Esophagus muscularis mucosa (tissue), 4 donors: ENCODE measurements at regions of chr13 and their contacts with region 1.

Region 1: DNA sequence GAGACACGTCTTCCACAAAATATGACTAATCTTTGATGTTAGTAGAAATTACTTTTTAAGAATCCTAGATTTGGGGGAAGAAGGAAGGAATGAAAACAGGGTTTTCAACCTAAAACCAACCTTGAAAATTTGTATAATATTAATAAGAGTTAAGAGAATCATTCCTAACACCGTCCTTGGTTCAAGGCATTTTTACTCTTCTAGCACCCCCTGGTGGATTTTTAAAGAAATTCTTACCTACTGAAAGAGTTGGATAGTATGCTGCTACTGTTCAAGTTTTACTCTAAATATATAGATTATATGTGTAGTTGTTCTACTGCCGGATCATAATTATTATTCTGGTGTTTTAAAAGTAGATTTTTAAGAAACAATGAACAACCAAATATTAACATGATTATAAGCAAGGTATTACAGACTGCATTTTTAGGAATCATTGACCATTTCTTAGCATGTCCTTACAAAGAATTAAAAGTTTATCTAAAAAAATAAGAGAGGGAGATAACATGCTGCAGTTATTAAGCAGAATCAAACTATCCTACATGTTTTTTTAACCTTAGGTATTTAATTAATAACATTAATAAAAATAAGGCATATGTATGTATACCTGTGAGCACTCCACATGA is 7.4 kb upstream of the SLITRK6 start:
- DNase-seq: no peak
- H3K4me3 ChIP-seq: no peak overlapping the region
- H3K27ac ChIP-seq: no peak overlapping the region
- H3K4me1 ChIP-seq: no peaks in the 10 kb centered on the region
- H3K27me3 ChIP-seq: no peaks in the 10 kb centered on the region
- CTCF ChIP-seq: peak; percentile 52 to 72 (median 68)
- EP300 ChIP-seq: no peak
- POLR2A ChIP-seq: no peak

Region 2: DNA sequence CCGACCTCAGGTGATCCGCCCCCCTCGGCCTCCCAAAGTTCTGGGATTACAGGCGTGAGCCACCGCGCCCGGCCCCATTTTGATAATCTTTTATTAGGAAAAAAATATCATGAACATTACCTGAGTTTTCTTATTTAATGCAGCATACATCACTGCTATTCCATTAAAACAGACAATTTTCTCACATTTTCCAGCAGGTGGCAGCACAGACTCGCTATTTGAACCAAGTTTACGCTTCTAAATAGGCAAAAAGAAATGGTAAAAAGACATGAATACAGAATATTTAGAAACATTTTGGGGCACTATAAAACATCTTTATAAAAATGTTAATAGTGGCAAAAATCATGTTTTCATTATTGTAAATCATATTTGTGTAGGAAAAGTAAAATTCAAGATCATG is 910.5 kb before region 1 on chr13:
- intact Hi-C with region 1: loop called (anchors 5 kb)
- DNase-seq: no peak
- H3K4me3 ChIP-seq: no peak overlapping the region
- H3K27ac ChIP-seq: no peak overlapping the region
- H3K4me1 ChIP-seq: no peaks in the 10 kb centered on the region
- H3K27me3 ChIP-seq: no peaks in the 10 kb centered on the region
- CTCF ChIP-seq: peak; percentile 49 to 60 (median 54)
- EP300 ChIP-seq: no peak
- POLR2A ChIP-seq: no peak

Region 3: DNA sequence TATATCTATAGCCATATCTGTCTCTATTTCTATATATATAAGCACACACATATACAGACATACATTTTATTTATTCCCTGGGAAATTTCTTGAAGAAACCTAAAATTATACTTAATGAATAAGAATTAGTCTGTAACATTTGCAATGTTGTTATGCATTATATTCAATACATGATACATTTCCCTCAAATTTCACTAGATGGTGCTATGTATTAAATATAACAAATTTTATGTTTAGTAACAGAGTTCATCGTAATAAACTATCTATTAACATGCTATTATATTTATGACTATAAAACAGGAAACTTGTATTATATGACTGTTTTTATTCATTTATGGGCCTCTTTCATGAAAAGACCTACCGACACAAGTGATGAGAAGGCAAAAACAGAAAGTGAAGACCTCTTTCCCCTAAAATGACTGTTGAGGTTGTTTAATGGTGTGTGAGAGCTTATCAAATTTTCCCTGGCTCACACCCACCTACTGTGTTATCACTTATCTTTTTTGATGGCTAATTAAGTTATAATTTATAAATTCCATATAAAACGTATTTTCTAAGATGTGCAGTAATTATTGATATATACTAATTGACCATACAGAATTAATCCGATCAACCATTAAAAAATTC is 889.3 kb before region 1 on chr13:
- intact Hi-C with region 1: loop called (anchors 2 kb)
- DNase-seq: no peak
- H3K4me3 ChIP-seq: peak overlapping the region in 1 of 4 donors; percentile 13
- H3K27ac ChIP-seq: no peak overlapping the region
- H3K4me1 ChIP-seq: no peaks in the 10 kb centered on the region
- H3K27me3 ChIP-seq: no peaks in the 10 kb centered on the region
- CTCF ChIP-seq: peak in 2 of 3 experiments; percentile 50 to 52
- EP300 ChIP-seq: no peak
- POLR2A ChIP-seq: no peak